ENCODE measurements at regions of chr6 and their contacts with region 1.

Region 1: GRCh38 chr6:105310371-105310770 is 92.5 kb downstream of the PREP start:
- DNase-seq: no peak

Region 2: GRCh38 chr6:106670236-106670635 is 1359.9 kb after region 1 on chr6:
- intact Hi-C with region 1: loop called in 1 of 2 experiments (anchors 5 kb)
- DNase-seq: no peak

Measured in posterior vena cava (tissue), 2 donors.